ENCODE measurements at regions of chr2 and their contacts with region 1.

Region 1: DNA sequence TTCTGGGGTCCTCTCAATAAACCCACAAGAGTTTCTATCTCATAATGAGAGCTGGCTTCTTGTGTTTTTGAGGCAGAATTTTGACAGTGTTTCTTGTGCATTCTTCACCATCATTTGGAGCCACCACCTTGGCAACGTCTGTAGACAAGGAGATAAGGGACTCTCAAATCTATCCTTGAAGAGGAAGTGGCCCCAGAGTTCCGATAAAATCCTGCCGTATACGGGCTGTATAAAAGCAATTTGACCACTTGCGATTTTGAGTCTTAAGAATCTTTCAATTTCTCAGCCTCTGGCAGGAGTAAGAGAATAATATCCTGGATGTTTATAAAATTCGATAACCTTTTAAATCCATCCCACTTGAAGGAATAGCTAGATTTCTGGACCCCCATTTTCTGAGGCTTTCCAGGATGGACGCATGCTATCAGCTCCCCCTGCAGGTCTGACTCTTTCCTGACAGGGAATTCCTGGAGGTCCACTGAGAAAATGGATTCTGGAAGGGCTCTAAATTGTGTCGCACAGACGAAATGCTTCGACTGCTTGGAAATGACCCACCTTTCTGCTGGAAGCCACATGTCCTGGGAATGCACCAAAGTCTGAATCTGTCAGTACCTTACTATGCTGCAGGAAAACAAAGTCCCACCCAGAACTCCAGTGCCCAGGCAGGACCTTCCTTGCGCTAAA is 54.1 kb downstream of the E2F6 start:
- DNase-seq: peak; percentile 67
- H3K4me3 ChIP-seq: peak overlapping the region; percentile 16 to 70 (median 16)
- H3K27ac ChIP-seq: no peak overlapping the region
- H3K4me1 ChIP-seq: no peaks in the 10 kb centered on the region
- H3K27me3 ChIP-seq: no peaks in the 10 kb centered on the region
- CTCF ChIP-seq: peak; percentile 75 to 79
- POLR2A ChIP-seq: no peak

Region 2: GRCh38 chr2:10832203-10832936 is 579.5 kb before region 1 on chr2:
- CTCF ChIA-PET with region 1: interaction called, 11 read pairs
- POLR2A ChIA-PET with region 1: no interaction called
- dilution Hi-C with region 1: no loop called
- intact Hi-C with region 1: no loop called
- DNase-seq: peak; percentile 79
- H3K4me3 ChIP-seq: no peak overlapping the region
- H3K27ac ChIP-seq: no peak overlapping the region
- H3K4me1 ChIP-seq: peaks cover 11% of the 10 kb centered on the region
- H3K27me3 ChIP-seq: peaks cover 0 to 3% of the 10 kb centered on the region in 2 experiments
- CTCF ChIP-seq: peak; percentile 93 to 98
- POLR2A ChIP-seq: no peak

Region 3: DNA sequence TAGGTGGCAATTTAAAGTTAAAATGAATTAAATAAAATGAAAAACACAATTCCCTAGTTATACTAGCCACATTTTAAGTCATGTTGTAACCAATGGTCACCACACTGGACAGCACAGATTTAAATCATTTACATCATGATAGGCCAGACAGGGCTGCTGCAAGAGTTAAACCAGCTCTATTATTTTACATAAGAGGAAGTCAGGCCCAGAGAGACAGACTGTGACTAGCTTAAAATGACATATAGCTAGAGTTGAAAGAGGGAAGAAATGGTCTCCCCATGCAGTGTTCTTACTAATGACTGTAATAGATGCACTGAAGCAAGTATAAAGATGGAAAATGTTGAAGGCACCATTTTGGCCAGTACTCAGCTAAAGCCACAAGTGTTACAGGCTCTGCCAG is 187.0 kb before region 1 on chr2:
- CTCF ChIA-PET with region 1: interaction called, 364 read pairs
- POLR2A ChIA-PET with region 1: no interaction called
- dilution Hi-C with region 1: no loop called
- intact Hi-C with region 1: no loop called
- DNase-seq: no peak
- H3K4me3 ChIP-seq: no peak overlapping the region
- H3K27ac ChIP-seq: no peak overlapping the region
- H3K4me1 ChIP-seq: peaks cover 9% of the 10 kb centered on the region
- H3K27me3 ChIP-seq: no peaks in the 10 kb centered on the region
- CTCF ChIP-seq: no peak
- POLR2A ChIP-seq: no peak

Region 4: DNA sequence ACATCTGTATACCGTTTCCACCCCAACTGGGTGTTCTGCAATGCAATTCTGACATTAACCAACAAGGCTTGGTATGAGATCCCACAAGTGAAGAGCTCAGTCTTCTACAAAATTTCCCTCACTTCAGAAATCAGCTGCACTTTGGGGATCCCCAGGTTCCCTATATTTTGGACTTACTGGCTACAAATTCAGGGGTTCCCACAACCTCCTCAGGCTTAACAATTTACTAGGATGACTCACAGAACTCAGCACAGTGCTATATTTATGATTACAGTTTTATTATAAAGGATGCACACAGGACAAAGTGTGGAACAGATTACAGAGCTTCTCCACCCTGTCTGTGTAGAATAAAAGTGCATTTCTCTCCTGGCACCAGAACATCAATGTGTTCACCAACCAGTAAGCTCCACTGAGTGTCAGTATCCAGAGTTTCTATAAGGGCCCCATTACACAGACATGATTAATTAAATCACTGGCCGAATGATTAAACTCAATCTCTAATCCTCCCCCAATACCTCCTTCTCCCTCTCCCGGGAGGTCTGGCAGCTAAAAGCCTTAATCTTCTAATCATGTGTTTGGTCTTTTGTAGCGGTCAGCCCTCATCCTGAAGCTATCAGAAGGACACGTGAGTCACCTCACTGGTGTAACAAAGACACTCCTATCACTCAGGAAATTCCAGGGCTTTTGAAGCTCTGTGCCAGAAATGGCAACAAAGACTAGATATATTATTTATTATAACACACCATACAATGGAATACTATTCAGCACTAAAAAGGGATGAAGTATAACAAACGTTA is 172.0 kb before region 1 on chr2:
- CTCF ChIA-PET with region 1: interaction called, 364 read pairs
- POLR2A ChIA-PET with region 1: no interaction called
- dilution Hi-C with region 1: no loop called
- intact Hi-C with region 1: no loop called
- DNase-seq: peak; percentile 50
- H3K4me3 ChIP-seq: no peak overlapping the region
- H3K27ac ChIP-seq: peak overlapping the region; percentile 10
- H3K4me1 ChIP-seq: peaks cover 4% of the 10 kb centered on the region
- H3K27me3 ChIP-seq: no peaks in the 10 kb centered on the region
- CTCF ChIP-seq: no peak
- POLR2A ChIP-seq: no peak

Region 5: DNA sequence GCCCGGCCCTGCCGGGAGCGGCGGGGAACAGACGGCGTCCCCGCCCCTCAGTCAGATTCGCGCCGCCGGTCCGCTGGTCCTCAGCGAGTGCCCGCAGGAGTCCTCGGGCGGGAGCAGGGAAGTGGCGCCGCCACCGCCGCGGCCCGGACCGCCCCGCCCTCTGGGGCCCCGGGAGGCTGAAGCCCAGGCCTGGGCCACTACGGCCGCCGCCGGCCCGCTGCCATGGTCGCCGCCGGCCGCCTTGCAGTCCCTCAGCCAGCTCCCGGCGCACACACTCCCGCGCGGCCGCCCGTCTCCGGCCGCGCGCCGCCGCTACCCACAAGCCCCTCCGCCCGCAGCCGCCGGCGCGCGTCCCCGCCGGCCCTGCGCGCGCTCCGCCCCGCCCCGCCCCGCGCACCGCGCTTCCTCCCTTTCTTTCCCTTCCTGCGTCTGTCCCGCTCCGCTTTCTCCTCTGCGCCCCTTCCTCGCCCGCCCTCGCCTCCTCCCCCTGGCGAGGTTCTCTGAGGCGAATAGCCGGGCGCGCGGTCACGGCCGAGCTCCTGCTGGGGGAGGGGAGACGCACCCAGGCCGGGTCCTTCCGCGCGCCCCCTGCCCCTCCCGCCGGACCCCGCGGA is 67.5 kb before region 1 on chr2 and contains the start of gene ROCK2:
- CTCF ChIA-PET with region 1: interaction called, 67 read pairs
- POLR2A ChIA-PET with region 1: interaction called, 3 read pairs
- dilution Hi-C with region 1: no loop called
- intact Hi-C with region 1: loop called (anchors 1 kb)
- DNase-seq: peak; percentile 82
- H3K4me3 ChIP-seq: peak within 1 kb of the TSS; percentile 79 to 94 (median 92)
- H3K27ac ChIP-seq: peak within 1 kb of the TSS; percentile 98
- H3K4me1 ChIP-seq: peaks cover 25% of the 10 kb centered on the region
- H3K27me3 ChIP-seq: no peaks in the 10 kb centered on the region
- CTCF ChIP-seq: no peak
- POLR2A ChIP-seq: peak; percentile 73
- total RNA-seq, gene ROCK2: 54.3 and 56.5 TPM in 2 replicates

Region 6: DNA sequence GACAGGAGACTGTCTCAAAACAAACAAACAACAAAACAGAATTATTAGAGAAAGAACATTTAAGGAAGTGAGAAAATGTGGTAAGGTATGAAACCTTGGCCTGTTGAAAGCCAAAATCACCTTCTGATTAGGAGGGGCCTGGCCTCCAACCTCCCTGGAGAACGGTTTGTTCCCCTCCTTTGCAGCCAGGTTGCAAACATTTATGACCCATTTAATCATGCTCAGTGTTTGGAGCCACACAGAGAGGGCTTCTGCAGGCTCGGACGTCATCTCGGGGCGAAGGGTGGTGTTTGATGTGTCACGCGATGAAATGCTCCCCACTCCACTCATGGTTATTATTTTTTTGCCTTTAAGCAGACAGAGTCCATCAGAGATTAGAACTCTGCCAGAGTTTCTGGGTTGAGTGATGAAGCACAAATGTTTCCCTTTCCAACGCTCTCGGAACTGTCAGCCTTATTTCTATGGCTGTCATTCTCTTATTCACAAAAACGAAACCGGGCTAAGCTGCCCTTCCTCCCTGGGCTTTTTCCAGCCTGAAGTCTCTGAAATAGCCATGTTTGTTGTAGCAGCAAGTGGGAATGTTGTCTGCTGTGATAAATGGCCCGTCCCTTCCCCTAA is 33.9 kb before region 1 on chr2:
- CTCF ChIA-PET with region 1: interaction called, 25 read pairs
- POLR2A ChIA-PET with region 1: no interaction called
- dilution Hi-C with region 1: no loop called
- intact Hi-C with region 1: loop called (anchors 1 kb)
- DNase-seq: no peak
- H3K4me3 ChIP-seq: no peak overlapping the region
- H3K27ac ChIP-seq: no peak overlapping the region
- H3K4me1 ChIP-seq: peaks cover 15% of the 10 kb centered on the region
- H3K27me3 ChIP-seq: no peaks in the 10 kb centered on the region
- CTCF ChIP-seq: no peak
- POLR2A ChIP-seq: no peak

Region 7: DNA sequence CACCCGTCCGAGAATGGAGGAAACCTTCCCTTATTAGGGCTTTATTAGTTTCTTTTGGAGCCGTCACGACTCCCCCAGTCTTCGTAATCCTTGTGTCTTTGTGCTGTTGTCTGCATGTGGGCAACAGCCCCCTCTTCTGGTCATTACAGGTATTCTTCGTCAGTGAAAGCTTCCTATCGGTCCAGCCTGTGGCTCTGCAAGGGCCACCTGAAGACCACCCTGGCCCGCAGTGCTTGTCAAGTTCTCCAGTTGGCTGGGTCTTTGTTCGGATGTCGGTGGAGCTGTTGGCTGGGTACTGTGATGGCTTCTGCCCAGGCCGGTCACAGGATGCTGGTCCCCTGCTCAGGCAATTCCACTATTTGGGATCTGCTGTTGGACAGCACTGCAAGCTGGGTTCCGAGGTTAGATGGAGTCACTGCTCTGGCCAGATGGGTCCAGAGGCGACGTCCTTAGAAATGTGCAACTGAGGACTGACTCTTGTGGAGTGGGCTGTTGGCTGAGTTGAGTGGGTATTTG is 34.9 kb after region 1 on chr2:
- CTCF ChIA-PET with region 1: interaction called, 30 read pairs
- POLR2A ChIA-PET with region 1: no interaction called
- dilution Hi-C with region 1: no loop called
- intact Hi-C with region 1: no loop called
- DNase-seq: peak; percentile 71
- H3K4me3 ChIP-seq: no peak overlapping the region
- H3K27ac ChIP-seq: no peak overlapping the region
- H3K4me1 ChIP-seq: no peaks in the 10 kb centered on the region
- H3K27me3 ChIP-seq: no peaks in the 10 kb centered on the region
- CTCF ChIP-seq: peak; percentile 72 to 75
- POLR2A ChIP-seq: no peak

Region 8: DNA sequence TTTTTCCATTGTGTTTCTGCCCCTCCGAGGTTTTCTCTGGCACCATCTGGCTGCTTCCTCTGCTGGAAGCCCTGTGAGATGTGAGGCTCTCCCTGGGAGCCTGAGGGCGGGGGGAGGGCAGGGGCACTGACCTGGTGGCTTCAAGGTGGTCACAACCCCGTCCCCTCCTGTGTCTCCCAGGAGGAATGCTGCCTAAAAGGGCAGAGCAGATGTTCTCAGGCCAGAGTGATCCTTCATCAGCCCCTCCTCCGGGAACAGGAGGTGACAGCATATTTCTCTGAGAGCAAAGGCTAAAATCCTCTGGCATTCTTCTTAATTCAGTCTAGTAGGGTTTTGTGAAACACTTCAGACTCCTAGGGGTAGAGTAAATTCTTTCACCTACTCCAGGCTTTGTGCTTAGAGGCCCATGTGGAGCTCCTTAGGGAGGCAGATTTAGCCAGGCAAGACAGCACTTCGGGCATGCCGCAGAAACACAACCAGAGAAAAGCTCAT is 103.6 kb after region 1 on chr2:
- CTCF ChIA-PET with region 1: no interaction called
- POLR2A ChIA-PET with region 1: no interaction called
- dilution Hi-C with region 1: no loop called
- intact Hi-C with region 1: no loop called
- DNase-seq: no peak
- H3K4me3 ChIP-seq: no peak overlapping the region
- H3K27ac ChIP-seq: no peak overlapping the region
- H3K4me1 ChIP-seq: no peaks in the 10 kb centered on the region
- H3K27me3 ChIP-seq: no peaks in the 10 kb centered on the region
- CTCF ChIP-seq: no peak
- POLR2A ChIP-seq: no peak

Region 9: DNA sequence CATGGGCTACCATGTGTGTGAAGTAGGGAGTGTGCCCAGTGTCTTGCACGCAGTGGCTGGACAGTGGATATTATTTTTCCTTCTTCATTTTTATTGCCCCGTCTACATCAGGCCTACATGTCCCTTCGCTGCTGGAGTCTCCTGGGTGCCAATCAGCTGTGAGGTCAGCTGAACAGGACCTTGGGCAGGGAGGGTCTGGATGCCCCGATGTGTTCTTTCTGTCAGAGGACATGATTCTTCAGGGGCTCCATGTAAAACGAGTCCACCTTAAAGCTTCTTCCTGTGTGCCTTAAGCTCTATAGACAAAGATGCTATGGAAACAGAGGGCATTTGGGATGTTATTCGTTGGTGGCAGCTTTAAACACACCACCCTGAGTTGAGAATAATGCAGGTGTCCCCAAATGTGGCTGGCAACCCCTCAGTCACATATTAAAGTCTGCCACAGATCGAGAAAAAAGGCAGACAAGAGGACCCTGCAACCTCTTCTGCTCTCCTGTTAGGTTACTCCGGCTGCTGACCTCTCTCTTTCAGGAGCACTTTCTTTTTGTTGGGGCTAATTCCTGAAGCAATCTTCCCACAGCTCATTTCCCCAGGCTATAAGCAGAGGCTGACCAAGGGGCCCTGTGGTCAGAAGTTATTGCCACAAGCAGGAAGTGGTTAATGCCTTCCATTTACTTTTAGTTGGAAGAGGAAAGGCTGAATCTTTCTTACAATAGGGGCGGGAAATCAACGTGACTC is 141.9 kb after region 1 on chr2:
- CTCF ChIA-PET with region 1: no interaction called
- POLR2A ChIA-PET with region 1: no interaction called
- dilution Hi-C with region 1: no loop called
- intact Hi-C with region 1: no loop called
- DNase-seq: no peak
- H3K4me3 ChIP-seq: no peak overlapping the region
- H3K27ac ChIP-seq: no peak overlapping the region
- H3K4me1 ChIP-seq: no peaks in the 10 kb centered on the region
- H3K27me3 ChIP-seq: peaks cover 3 to 10% of the 10 kb centered on the region in 2 experiments
- CTCF ChIP-seq: no peak
- POLR2A ChIP-seq: no peak